Activated naive CD4-positive, alpha-beta T cell treated with anti-CD3 and anti-CD28 coated beads for 36 hours (primary cell): ENCODE measurements at regions of chr5 and their contacts with region 1.

Region 1: DNA sequence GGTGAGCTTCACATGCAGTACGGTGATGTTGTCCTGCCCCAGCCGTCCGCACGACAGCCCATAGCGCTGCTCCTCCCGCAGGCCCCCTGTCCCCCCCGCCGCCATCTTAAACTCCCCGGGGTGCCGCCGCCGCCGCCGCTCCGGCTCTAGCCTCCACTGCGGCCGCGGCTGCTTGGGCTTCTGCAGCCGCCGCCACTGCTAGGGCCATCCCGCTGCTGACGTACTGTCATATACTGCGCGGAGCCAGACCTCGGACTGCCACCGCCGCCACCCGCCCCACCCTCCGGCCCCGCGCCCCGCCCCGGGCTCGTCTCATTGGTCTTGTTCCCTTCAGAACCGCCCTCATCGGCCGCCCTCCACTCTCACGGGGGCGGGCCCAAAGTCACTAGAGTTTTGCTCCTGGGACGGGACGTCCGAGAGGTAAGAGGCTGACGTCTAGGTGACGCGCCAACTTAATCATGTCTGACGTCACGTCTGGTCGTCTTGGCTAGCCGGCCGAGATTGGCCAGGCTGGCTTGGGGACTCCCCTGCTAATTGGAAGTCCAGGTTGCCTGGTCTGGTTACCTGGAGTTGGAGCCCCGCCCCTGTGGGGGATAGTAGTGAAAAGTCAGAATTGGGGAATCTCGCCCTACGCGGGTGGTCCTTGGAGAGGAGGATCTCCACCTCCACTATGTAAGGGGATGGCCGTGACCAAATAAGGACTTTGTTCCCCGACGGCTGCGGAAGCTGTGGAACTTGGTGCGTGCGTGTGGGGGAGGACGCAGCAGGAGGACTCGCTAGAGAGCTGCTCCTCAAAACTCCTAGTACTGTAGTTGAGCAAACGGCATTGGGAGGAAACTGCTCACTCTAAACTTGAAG is at the start of gene ELL2:
- DNase-seq: peak; percentile 98
- H3K4me3 Mint-ChIP-seq: peak within 1 kb of the TSS; percentile 93
- H3K27ac Mint-ChIP-seq: peak within 1 kb of the TSS; percentile 89
- H3K4me1 Mint-ChIP-seq: peaks cover 40% of the 10 kb centered on the region
- H3K27me3 Mint-ChIP-seq: no peaks in the 10 kb centered on the region
- total RNA-seq, gene ELL2: 75.0 to 78.6 TPM

Region 2: GRCh38 chr5:95554647-95555548 is 406.9 kb before region 1 on chr5 and contains the starts of genes ARSK and SKIC3:
- CTCF ChIA-PET with region 1: no interaction called
- intact Hi-C with region 1: loop called (anchors 10 kb)
- DNase-seq: peak; percentile 92
- H3K4me3 Mint-ChIP-seq: peak within 1 kb of the TSS; percentile 87
- H3K27ac Mint-ChIP-seq: peak within 1 kb of the TSS; percentile 93
- H3K4me1 Mint-ChIP-seq: peaks cover 45% of the 10 kb centered on the region
- H3K27me3 Mint-ChIP-seq: no peaks in the 10 kb centered on the region
- total RNA-seq, gene ARSK: 4.5 to 5.1 TPM
- total RNA-seq, gene SKIC3: 67.4 to 69.5 TPM

Region 3: DNA sequence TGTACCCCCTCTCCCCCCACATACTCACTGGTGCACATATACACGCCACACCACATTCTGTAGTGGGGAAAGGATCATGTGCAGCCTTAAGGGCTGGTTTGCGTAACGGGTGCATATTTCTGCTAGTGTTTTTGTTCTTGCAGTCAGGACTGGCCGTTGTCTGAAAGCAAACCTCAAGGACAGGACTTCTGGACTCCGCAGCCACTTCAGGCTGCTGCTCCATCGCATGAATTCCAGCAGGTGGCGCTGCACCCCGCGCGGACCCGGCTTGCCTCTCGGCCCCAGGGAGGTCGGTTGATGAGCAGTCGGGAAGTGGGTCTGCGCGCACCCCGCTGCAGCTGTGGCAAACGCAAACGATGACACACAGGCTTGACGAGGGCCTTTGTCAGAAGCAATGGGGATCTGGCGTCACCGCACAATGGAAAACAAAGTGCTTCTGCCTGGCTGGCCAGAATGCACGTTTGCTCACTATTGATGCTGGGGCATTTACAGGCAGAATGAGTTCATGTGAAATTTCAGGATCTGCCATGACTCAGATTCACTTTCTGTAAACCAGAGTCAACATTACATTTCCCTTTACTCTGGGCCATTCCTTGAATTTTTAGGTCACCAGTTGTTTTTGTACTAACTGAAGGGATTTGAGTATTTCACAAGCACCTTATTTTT is 103.1 kb before region 1 on chr5:
- CTCF ChIA-PET with region 1: interaction called, 5 read pairs
- intact Hi-C with region 1: loop called (anchors 1 kb)
- DNase-seq: peak; percentile 98
- H3K4me3 Mint-ChIP-seq: peak overlapping the region; percentile 30
- H3K27ac Mint-ChIP-seq: peak overlapping the region; percentile 83
- H3K4me1 Mint-ChIP-seq: peaks cover 52% of the 10 kb centered on the region
- H3K27me3 Mint-ChIP-seq: no peaks in the 10 kb centered on the region

Region 4: DNA sequence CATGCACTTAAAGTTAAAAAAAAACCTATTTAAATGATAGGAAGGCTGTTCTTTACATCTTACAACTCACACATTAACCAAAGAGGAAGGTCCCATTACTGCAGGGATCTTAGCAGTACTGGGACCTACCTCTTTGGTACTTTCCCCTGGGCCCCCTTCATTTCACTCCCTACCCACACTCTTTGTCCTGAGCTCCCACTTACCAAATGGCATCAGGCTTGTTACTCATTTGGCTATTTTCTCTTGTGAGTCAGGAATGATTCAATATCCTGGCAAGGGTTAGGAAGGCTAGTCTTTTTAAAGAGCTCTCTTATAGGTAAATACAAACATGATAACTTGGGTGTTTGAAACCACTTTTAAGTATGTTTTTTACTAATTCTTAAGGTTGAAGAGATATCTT is 117.2 kb after region 1 on chr5:
- CTCF ChIA-PET with region 1: no interaction called
- intact Hi-C with region 1: loop called (anchors 1 kb)
- DNase-seq: peak; percentile 71
- H3K4me3 Mint-ChIP-seq: no peak overlapping the region
- H3K27ac Mint-ChIP-seq: peak overlapping the region; percentile 77
- H3K4me1 Mint-ChIP-seq: peaks cover 38% of the 10 kb centered on the region
- H3K27me3 Mint-ChIP-seq: peaks cover 9% of the 10 kb centered on the region

Region 5: DNA sequence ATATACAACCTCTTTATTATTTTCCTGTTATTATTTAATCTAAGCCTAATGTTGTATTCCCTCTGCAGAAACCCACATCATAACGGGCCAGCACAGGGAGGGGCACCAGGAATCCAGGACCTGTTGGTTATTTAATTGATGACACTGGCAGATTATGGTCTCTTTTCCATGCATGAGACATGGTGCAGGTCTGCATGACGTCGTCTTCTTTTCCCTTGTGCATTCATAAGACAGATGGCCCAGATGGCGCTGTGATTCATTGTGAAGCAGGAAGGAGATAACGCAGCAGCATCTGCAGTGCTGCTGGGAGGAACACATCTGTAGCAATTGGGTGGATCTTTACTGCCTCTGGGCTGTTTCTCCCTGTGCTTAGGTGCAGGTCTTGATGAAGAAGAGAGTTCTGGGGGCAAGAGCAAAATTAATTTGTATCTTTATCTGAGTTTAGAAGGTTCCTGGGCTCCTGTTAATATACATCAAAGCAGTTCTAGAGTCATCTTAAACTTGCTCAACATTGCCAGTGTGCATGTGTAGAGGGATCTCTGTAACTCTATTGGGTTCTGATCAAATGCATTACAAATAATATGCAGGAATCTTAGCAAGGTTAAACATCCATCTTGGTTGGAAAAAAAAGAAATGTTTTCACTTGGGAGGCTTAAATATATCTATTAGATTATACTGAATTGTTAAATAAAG is 295.1 kb after region 1 on chr5:
- CTCF ChIA-PET with region 1: no interaction called
- intact Hi-C with region 1: no loop called
- DNase-seq: peak; percentile 17
- H3K4me3 Mint-ChIP-seq: no peak overlapping the region
- H3K27ac Mint-ChIP-seq: no peak overlapping the region
- H3K4me1 Mint-ChIP-seq: peaks cover 4% of the 10 kb centered on the region
- H3K27me3 Mint-ChIP-seq: peaks cover 3% of the 10 kb centered on the region

Region 6: GRCh38 chr5:96279801-96280542 is 318.1 kb after region 1 on chr5:
- CTCF ChIA-PET with region 1: no interaction called
- intact Hi-C with region 1: loop called (anchors 1 kb)
- DNase-seq: peak; percentile 37
- H3K4me3 Mint-ChIP-seq: no peak overlapping the region
- H3K27ac Mint-ChIP-seq: peak overlapping the region; percentile 31
- H3K4me1 Mint-ChIP-seq: peaks cover 13% of the 10 kb centered on the region
- H3K27me3 Mint-ChIP-seq: peaks cover 26% of the 10 kb centered on the region

Region 7: GRCh38 chr5:96662725-96663513 is 701.1 kb after region 1 on chr5:
- CTCF ChIA-PET with region 1: no interaction called
- intact Hi-C with region 1: loop called (anchors 1 kb)
- DNase-seq: peak; percentile 89
- H3K4me3 Mint-ChIP-seq: peak overlapping the region; percentile 96
- H3K27ac Mint-ChIP-seq: peak overlapping the region; percentile 96
- H3K4me1 Mint-ChIP-seq: peaks cover 22% of the 10 kb centered on the region
- H3K27me3 Mint-ChIP-seq: peaks cover 3% of the 10 kb centered on the region